HepG2 (cell line): ENCODE measurements at regions of chr13 and their contacts with region 1.

Region 1: GRCh38 chr13:93963266-93964145 is 516.0 kb downstream of the DCT start:
- DNase-seq: peak; percentile 83
- ATAC-seq: peak; percentile 61
- H3K4me3 ChIP-seq: no peak overlapping the region; a peak in 2 of 6 replicates
- H3K27ac ChIP-seq: peak overlapping the region; percentile 39
- H3K4me1 ChIP-seq: peaks cover 52% of the 10 kb centered on the region
- H3K27me3 ChIP-seq: no peaks in the 10 kb centered on the region
- CTCF ChIP-seq: no peak
- EP300 ChIP-seq: peak in 1 of 2 experiments; percentile 84; a peak in 2 of 4 replicates
- POLR2A ChIP-seq: no peak
- RAD21 ChIP-seq: no peak

Region 2: DNA sequence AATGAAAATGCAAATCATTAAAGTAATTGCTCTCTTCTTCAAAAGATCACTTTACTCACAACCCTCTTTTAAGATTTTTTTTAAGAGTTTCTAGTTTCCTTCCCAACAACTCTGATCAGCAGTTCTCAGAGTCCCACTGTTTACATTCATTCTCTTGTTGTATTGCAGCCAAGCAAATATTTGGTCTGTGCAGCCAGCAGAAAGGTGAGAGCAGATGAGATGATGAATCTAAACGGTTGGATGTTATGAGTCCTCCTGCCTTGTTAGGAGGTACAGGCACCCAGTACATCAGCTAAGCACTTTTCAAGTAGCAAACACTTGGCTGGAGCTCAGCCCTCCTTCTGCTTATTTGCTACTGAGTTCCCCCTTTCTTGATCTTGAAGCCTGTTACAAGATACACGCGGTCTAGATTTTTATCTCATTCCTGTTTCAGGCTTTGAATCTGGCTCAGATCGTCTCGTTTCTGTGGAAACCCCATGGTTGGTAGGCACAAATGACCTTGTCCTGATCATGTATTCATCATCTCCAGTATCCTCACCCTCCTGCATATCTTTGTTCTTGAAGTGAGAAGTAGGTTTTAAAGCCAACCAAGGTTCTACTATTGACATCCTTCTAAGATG is 215.2 kb after region 1 on chr13:
- CTCF ChIA-PET with region 1: no interaction called
- POLR2A ChIA-PET with region 1: no interaction called
- in situ Hi-C with region 1: no loop called
- intact Hi-C with region 1: loop called (anchors 5 kb)
- DNase-seq: peak; percentile 53
- ATAC-seq: peak; percentile 89
- H3K4me3 ChIP-seq: no peak overlapping the region
- H3K27ac ChIP-seq: no peak overlapping the region
- H3K4me1 ChIP-seq: peaks cover 45% of the 10 kb centered on the region
- H3K27me3 ChIP-seq: no peaks in the 10 kb centered on the region
- CTCF ChIP-seq: no peak
- EP300 ChIP-seq: 0 out of 4 replicates have a peak, but pooled peaks of 1 of the 2 experiments have one; percentile 42
- POLR2A ChIP-seq: no peak
- RAD21 ChIP-seq: no peak

Region 3: GRCh38 chr13:95516021-95516420 is 1552.5 kb after region 1 on chr13:
- CTCF ChIA-PET with region 1: no interaction called
- POLR2A ChIA-PET with region 1: no interaction called
- in situ Hi-C with region 1: no loop called
- intact Hi-C with region 1: no loop called
- DNase-seq: no peak
- ATAC-seq: no peak
- H3K4me3 ChIP-seq: no peak overlapping the region
- H3K27ac ChIP-seq: no peak overlapping the region
- H3K4me1 ChIP-seq: no peaks in the 10 kb centered on the region
- H3K27me3 ChIP-seq: no peaks in the 10 kb centered on the region
- CTCF ChIP-seq: no peak
- EP300 ChIP-seq: no peak
- POLR2A ChIP-seq: no peak
- RAD21 ChIP-seq: no peak